ENCODE measurements at regions of chr13 and their contacts with region 1.

Region 1: DNA sequence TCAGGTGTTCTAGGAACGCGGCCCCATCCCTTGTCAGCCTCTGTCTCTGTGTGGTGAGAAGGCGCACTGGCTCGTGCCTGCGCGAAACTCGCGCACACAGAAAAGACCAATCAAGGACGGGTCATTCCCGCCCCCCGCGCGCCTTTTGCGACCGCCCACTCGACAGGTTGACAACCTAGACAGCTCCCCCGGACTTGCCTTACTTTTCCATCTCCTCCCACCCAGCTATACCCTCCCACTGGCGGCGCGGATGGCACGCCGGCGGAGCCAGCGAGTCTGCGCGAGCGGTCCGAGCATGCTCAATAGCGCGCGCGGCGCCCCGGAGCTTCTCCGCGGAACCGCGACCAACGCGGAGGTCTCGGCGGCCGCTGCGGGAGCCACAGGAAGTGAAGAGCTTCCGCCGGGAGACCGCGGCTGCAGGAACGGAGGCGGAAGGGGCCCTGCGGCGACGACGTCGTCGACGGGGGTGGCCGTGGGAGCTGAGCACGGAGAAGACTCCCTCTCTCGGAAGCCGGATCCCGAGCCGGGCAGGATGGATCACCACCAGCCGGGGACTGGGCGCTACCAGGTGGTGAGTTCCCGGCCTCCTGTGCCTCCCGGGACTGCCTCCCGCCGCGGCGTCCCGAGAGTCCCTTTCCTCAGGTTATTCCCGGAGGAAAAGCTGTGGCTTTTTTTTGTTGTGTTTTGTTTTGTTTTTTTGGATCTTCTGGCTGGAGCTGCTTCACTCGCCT is at the start of gene NDFIP2:
- DNase-seq: peak; percentile 94
- H3K4me3 Mint-ChIP-seq: peak within 1 kb of the TSS; percentile 90
- H3K27ac Mint-ChIP-seq: peak within 1 kb of the TSS; percentile 98
- H3K4me1 Mint-ChIP-seq: peaks cover 56% of the 10 kb centered on the region
- H3K27me3 Mint-ChIP-seq: no peaks in the 10 kb centered on the region
- total RNA-seq, gene NDFIP2: 175 to 178 TPM

Region 2: GRCh38 chr13:79090552-79091124 is 390.5 kb before region 1 on chr13:
- CTCF ChIA-PET with region 1: no interaction called
- POLR2A ChIA-PET with region 1: no interaction called
- intact Hi-C with region 1: no loop called
- DNase-seq: no peak
- H3K4me3 Mint-ChIP-seq: no peak overlapping the region
- H3K27ac Mint-ChIP-seq: no peak overlapping the region
- H3K4me1 Mint-ChIP-seq: no peaks in the 10 kb centered on the region
- H3K27me3 Mint-ChIP-seq: peaks cover 2% of the 10 kb centered on the region

Region 3: GRCh38 chr13:79405829-79406596 is 75.1 kb before region 1 on chr13 and contains the start of gene RBM26:
- CTCF ChIA-PET with region 1: interaction called, 3 read pairs
- POLR2A ChIA-PET with region 1: interaction called, 53 read pairs
- intact Hi-C with region 1: loop called (anchors 1 kb)
- DNase-seq: peak; percentile 96
- H3K4me3 Mint-ChIP-seq: peak within 1 kb of the TSS; percentile 88
- H3K27ac Mint-ChIP-seq: no peak within 1 kb of the TSS
- H3K4me1 Mint-ChIP-seq: peaks cover 38% of the 10 kb centered on the region
- H3K27me3 Mint-ChIP-seq: no peaks in the 10 kb centered on the region
- total RNA-seq, gene RBM26: 54.8 to 57.7 TPM

Region 4: DNA sequence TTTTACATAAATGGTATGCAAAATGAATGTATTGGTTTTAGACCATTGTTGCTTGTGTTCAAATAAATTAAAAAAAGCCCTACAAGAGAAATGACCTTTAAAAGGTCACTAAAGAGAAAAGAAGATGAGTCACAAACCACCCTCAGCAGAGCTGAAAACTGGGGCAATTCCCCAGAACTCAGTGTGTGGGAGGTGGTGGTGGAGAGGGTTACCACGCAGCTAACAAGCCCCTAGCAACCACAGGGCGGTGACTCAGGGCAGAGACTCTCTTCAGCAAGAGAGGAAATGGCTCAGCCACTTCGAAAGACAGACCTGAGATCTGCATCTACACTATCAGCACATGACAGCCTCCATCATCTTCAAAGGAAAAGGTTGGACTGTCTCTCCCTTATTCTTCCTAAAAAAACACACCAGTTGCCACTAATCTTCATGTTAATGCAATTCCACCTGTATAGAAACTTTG is 29.6 kb before region 1 on chr13:
- CTCF ChIA-PET with region 1: interaction called, 29 read pairs
- POLR2A ChIA-PET with region 1: interaction called, 114 read pairs
- intact Hi-C with region 1: loop called (anchors 1 kb)
- DNase-seq: peak; percentile 98
- H3K4me3 Mint-ChIP-seq: peak overlapping the region; percentile 74
- H3K27ac Mint-ChIP-seq: peak overlapping the region; percentile 97
- H3K4me1 Mint-ChIP-seq: peaks cover 84% of the 10 kb centered on the region
- H3K27me3 Mint-ChIP-seq: no peaks in the 10 kb centered on the region

Region 5: GRCh38 chr13:79491715-79492114 is 10.6 kb after region 1 on chr13:
- CTCF ChIA-PET with region 1: interaction called, 3 read pairs
- POLR2A ChIA-PET with region 1: interaction called, 4 read pairs
- intact Hi-C with region 1: loop called (anchors 1 kb)
- DNase-seq: no peak
- H3K4me3 Mint-ChIP-seq: peak overlapping the region; percentile 14
- H3K27ac Mint-ChIP-seq: peak overlapping the region; percentile 78
- H3K4me1 Mint-ChIP-seq: peaks cover 81% of the 10 kb centered on the region
- H3K27me3 Mint-ChIP-seq: no peaks in the 10 kb centered on the region

Region 6: GRCh38 chr13:79522583-79522982 is 41.5 kb after region 1 on chr13:
- CTCF ChIA-PET with region 1: interaction called, 3 read pairs
- POLR2A ChIA-PET with region 1: interaction called, 4 read pairs
- intact Hi-C with region 1: loop called (anchors 1 kb)
- DNase-seq: peak; percentile 55
- H3K4me3 Mint-ChIP-seq: peak overlapping the region; percentile 4
- H3K27ac Mint-ChIP-seq: peak overlapping the region; percentile 80
- H3K4me1 Mint-ChIP-seq: peaks cover 22% of the 10 kb centered on the region
- H3K27me3 Mint-ChIP-seq: no peaks in the 10 kb centered on the region

Measured in activated CD4-positive, alpha-beta memory T cell treated with anti-CD3 and anti-CD28 coated beads for 36 hours (primary cell).